ENCODE measurements at regions of chr13 and their contacts with region 1.

Region 1: GRCh38 chr13:45280751-45281634 is 60.0 kb downstream of the TPT1 start:
- DNase-seq: peak; percentile 77 to 92 (median 86)
- H3K4me3 ChIP-seq: peak overlapping the region in 30 of 59 donors; percentile 1 to 47 (median 24)
- H3K27ac ChIP-seq: peak overlapping the region in 56 of 59 donors; percentile 5 to 87 (median 72)
- H3K27me3 ChIP-seq: no peaks in the 10 kb centered on the region
- CTCF ChIP-seq: peak; percentile 56 to 97 (median 87)

Region 2: DNA sequence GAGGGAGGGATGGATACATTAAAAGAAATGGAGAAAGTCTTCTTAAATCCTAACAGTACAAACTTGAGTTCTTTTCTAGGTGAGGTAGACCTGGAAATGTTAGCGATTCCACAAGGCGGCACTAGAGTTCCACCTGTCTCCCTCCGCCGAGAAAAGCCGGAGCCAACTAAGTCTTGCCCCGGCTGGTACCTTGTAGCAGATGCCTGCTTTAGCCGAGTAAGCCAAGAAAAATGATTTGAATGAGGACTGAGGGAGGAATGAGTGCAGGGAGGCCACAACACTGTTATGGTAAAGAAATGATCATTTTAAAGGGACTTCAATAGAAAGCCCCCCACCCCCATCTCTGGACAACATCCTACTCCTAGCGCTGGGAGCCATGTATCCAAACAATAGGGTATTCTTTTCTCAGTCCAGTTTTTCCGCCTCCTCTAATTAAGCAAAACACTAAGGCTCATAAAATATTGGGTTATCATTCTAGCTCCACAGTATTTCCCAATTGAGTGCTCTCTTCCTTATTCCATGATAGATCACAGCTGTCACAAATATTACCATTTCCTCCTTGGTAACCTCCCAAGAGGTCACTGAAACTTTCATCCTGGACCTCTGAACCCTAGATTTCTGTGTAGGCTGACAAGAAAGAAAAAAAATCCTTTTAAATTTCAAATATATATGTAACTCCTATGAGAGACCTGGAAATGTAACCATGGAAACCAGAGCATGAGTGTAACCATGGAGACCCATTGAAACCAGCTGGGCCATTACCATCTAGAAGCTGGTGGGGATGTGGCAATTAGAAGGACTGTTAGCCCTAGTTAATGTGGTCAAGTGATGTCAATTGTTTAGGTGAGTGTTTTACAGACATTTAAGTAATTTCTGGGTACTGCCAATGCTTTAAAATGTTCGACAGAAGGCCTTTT is 233.3 kb before region 1 on chr13:
- intact Hi-C with region 1: loop called (anchors 1 to 2 kb)
- DNase-seq: peak; percentile 59 to 87 (median 84)
- H3K4me3 ChIP-seq: peak overlapping the region; percentile 37 to 77 (median 59)
- H3K27ac ChIP-seq: peak overlapping the region in 58 of 59 donors; percentile 32 to 97 (median 84)
- H3K27me3 ChIP-seq: no peaks in the 10 kb centered on the region
- CTCF ChIP-seq: peak; percentile 80 to 97 (median 89)

Region 3: DNA sequence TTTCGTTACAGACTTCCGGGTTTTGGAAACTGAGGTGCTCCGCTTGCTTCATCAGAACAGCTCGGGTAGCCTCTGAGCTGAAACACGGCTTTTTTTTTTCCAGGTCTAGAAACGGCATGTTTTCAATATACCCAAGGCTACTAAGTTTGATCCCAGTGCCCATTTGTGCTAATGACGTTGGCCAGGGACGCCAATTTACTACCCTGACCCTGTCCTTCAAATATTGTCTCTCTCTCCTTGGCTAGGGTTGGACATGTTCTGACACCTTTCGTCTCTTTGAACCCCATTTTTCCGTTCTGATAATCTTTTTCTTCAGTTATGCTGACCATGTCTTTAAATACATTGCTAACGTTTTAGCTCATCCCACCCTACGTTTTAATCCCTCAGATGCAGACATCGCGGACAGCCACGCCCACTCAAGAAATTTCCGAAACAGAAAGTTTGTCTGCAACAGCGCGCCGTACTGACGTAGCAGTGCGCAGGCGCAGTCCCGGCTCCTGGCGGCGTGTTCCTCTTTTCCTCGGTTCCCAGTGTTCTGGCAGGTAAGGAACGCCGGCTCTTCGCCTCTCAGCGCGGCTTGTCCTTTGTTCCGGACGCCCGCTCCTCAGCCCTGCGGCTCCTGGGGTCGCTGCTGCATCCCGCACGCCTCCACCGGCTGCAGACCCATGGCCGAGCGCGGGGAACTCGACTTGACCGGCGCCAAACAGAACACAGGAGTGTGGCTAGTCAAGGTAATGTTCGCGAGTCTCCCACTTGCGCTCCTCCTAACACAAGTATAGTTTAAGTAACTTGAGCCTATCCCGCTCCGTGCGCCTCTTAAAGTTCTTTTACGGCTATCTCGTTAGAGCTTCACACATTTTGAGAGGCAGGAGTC is 160.8 kb before region 1 on chr13 and contains the start of gene GTF2F2:
- intact Hi-C with region 1: loop called in 1 of 2 experiments (anchors 5 kb)
- DNase-seq: peak; percentile 65 to 92 (median 81)
- H3K4me3 ChIP-seq: peak within 1 kb of the TSS; percentile 68 to 100 (median 92)
- H3K27ac ChIP-seq: peak within 1 kb of the TSS; percentile 26 to 95 (median 87)
- H3K27me3 ChIP-seq: no peaks in the 10 kb centered on the region
- CTCF ChIP-seq: peak in 36 of 56 donors; percentile 6 to 55 (median 31)
- total RNA-seq, gene GTF2F2: 9.9 to 19.8 (median 13.9) TPM

Region 4: GRCh38 chr13:45194081-45194939 is 86.7 kb before region 1 on chr13:
- intact Hi-C with region 1: loop called (anchors 1 kb)
- DNase-seq: peak; percentile 33 to 89 (median 84)
- H3K4me3 ChIP-seq: peak overlapping the region; percentile 14 to 76 (median 58)
- H3K27ac ChIP-seq: peak overlapping the region in 56 of 59 donors; percentile 7 to 88 (median 77)
- H3K27me3 ChIP-seq: no peaks in the 10 kb centered on the region
- CTCF ChIP-seq: peak; percentile 52 to 89 (median 71)

Region 5: DNA sequence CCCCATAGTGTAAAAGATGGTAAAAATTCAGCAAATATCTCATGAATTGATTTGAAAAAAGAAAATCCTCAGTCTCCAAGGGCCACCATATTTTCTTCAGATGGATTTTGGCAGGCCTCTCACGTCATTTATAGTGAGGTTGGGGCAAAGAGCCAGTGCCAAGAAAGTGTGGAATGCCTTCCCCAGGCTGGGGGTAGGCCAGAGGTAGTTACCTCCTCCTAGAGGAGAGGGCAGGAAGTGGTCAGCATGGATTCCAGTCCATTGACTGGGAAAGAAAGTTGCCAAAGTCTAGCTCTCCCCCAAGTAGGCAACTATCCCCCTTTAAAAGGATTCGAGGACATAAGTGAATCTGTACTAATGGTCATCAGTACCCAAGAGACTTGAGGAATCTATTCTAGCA is 11.8 kb before region 1 on chr13:
- intact Hi-C with region 1: no loop called
- DNase-seq: no peak
- H3K4me3 ChIP-seq: no peak overlapping the region
- H3K27ac ChIP-seq: no peak overlapping the region
- H3K27me3 ChIP-seq: no peaks in the 10 kb centered on the region
- CTCF ChIP-seq: no peak

Region 6: GRCh38 chr13:45310341-45311125 is 29.5 kb after region 1 on chr13:
- intact Hi-C with region 1: loop called in 1 of 2 experiments (anchors 2 kb)
- DNase-seq: no peak
- H3K4me3 ChIP-seq: peak overlapping the region; percentile 32 to 85 (median 65)
- H3K27ac ChIP-seq: peak overlapping the region in 43 of 59 donors; percentile 2 to 86 (median 57)
- H3K27me3 ChIP-seq: no peaks in the 10 kb centered on the region
- CTCF ChIP-seq: no peak

Measured in dorsolateral prefrontal cortex (tissue), 120 donors.